Esophagus muscularis mucosa (tissue), 4 donors: ENCODE measurements at regions of chr1 and their contacts with region 1.

Region 1: DNA sequence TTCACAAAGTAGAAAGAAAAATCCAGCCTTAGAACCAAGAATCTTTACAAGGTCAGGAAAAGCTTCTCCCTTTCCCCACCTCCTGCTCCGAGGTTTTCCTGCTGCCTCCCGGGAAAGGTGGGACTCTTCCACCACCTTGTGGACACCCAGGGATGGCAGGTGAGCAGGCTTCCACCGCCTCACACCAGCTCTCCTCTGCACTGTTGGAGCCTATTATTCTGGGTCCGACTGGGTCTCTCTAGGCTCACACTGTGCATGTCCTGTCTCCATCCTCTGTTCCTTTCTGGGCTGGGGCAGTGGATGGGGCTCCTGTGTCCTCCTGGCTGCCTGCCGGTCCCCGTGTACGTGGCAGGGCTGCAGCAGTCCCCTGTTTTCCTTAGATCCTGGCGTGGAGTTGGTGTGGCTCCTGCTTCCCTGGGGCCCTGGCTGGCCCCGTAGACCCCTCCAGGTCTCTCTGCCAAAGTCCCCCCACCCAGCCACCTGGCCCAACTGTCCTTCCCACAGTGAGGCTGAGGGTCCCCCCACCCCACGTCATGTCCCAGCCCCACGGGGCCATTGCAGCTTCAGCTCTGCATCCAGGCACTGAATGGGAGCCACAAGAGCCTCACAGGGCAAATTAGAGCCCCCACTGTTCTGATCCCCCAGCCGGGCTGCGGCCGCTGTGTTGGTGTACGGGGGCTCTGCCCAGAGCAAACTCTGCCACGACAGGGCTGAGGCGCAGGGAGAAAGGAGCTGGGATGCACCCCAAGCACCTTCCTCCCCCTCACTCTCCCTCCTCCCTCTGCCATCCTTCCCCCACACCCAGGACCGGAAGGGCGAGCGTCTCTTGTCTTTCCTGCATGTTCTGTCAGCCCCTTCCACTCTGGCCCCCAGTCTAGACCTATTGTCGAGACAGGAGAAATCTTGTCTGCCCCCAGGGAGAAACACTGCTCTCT is 3.3 kb upstream of the SLC45A1 start:
- DNase-seq: no peak
- H3K4me3 ChIP-seq: no peak overlapping the region
- H3K27ac ChIP-seq: peak overlapping the region in 1 of 4 donors; percentile 55
- H3K4me1 ChIP-seq: peaks cover 20 to 57% (median 52%) of the 10 kb centered on the region in 4 donors
- H3K27me3 ChIP-seq: no peaks in the 10 kb centered on the region
- CTCF ChIP-seq: peak; percentile 91 to 96 (median 92)
- EP300 ChIP-seq: no peak
- POLR2A ChIP-seq: no peak

Region 2: GRCh38 chr1:7983086-7983778 is 331.4 kb before region 1 on chr1:
- intact Hi-C with region 1: loop called (anchors 2 kb)
- DNase-seq: no peak
- H3K4me3 ChIP-seq: no peak overlapping the region
- H3K27ac ChIP-seq: peak overlapping the region in 3 of 4 donors; percentile 45 to 54 (median 52)
- H3K4me1 ChIP-seq: peaks cover 7 to 16% (median 15%) of the 10 kb centered on the region in 4 donors
- H3K27me3 ChIP-seq: no peaks in the 10 kb centered on the region
- CTCF ChIP-seq: no peak
- EP300 ChIP-seq: no peak
- POLR2A ChIP-seq: no peak

Region 3: GRCh38 chr1:8032366-8032910 is 282.2 kb before region 1 on chr1:
- intact Hi-C with region 1: loop called (anchors 2 kb)
- DNase-seq: no peak
- H3K4me3 ChIP-seq: no peak overlapping the region
- H3K27ac ChIP-seq: peak overlapping the region in 2 of 4 donors; percentile 94 to 96
- H3K4me1 ChIP-seq: peaks cover 13 to 43% (median 36%) of the 10 kb centered on the region in 4 donors
- H3K27me3 ChIP-seq: no peaks in the 10 kb centered on the region
- CTCF ChIP-seq: no peak
- EP300 ChIP-seq: no peak
- POLR2A ChIP-seq: no peak

Region 4: DNA sequence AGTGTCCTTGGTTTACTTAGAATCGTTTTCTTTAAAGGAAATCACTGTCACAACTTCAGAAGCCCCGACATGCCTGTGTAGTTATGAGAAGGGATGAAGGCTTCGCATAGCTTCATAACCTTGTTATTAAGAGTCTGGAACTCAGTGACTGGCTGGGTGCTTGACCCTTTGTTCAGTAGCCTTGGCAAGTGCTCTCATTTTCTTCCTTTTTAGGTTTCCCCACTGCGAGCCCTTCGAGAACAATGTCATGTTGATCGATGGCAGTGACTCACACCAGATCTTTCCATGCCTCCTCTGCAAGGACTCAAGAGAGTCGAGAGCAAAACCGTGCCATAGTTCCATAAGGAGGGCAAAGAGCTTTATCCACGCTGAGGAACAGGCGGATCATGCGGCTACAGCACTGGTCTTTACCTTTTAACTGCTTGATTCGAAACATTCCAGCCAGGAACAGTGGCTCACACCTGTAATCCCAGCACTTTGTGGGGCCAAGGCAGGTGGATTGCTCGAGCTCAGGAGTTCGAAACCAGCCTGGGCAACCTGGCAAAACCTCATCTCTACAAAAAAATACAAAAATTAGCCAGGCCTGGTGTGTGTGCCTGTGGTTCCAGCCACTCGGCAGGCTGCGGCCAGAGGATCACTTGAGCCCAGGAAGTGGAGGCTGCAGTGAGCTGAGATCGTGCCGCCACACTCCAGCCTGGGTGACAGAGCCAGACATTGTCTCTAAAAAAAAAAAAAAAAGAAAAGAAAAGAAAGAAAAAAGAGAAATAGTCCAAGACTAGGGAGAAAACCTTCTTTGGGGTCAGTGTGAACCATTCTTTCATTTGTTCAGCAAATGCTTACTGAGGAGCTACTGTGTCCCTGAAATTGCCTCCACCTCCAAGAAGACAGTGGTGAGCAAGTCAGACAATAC is 193.1 kb before region 1 on chr1:
- intact Hi-C with region 1: loop called (anchors 10 kb)
- DNase-seq: peak; percentile 97
- H3K4me3 ChIP-seq: peak overlapping the region in 3 of 4 donors; percentile 34 to 44 (median 36)
- H3K27ac ChIP-seq: peak overlapping the region; percentile 91 to 97 (median 94)
- H3K4me1 ChIP-seq: peaks cover 41 to 78% (median 72%) of the 10 kb centered on the region in 4 donors
- H3K27me3 ChIP-seq: no peaks in the 10 kb centered on the region
- CTCF ChIP-seq: no peak
- EP300 ChIP-seq: peak; percentile 94
- POLR2A ChIP-seq: no peak

Region 5: GRCh38 chr1:8202182-8202905 is 112.3 kb before region 1 on chr1:
- intact Hi-C with region 1: loop called (anchors 10 kb)
- DNase-seq: no peak
- H3K4me3 ChIP-seq: peak overlapping the region; percentile 14 to 43 (median 28)
- H3K27ac ChIP-seq: peak overlapping the region; percentile 96 to 98 (median 98)
- H3K4me1 ChIP-seq: peaks cover 33 to 92% (median 84%) of the 10 kb centered on the region in 4 donors
- H3K27me3 ChIP-seq: no peaks in the 10 kb centered on the region
- CTCF ChIP-seq: no peak
- EP300 ChIP-seq: peak; percentile 95
- POLR2A ChIP-seq: no peak

Region 6: GRCh38 chr1:8370046-8370881 is 55.7 kb after region 1 on chr1:
- intact Hi-C with region 1: no loop called
- DNase-seq: no peak
- H3K4me3 ChIP-seq: peak overlapping the region in 2 of 4 donors; percentile 4 to 5
- H3K27ac ChIP-seq: peak overlapping the region; percentile 91 to 95 (median 93)
- H3K4me1 ChIP-seq: peaks cover 97 to 100% (median 100%) of the 10 kb centered on the region in 4 donors
- H3K27me3 ChIP-seq: no peaks in the 10 kb centered on the region
- CTCF ChIP-seq: no peak
- EP300 ChIP-seq: no peak
- POLR2A ChIP-seq: no peak